Activated CD8-positive, alpha-beta T cell treated with anti-CD3 and anti-CD28 coated beads for 36 hours (primary cell): ENCODE measurements at regions of chr15 and their contacts with region 1.

Region 1: DNA sequence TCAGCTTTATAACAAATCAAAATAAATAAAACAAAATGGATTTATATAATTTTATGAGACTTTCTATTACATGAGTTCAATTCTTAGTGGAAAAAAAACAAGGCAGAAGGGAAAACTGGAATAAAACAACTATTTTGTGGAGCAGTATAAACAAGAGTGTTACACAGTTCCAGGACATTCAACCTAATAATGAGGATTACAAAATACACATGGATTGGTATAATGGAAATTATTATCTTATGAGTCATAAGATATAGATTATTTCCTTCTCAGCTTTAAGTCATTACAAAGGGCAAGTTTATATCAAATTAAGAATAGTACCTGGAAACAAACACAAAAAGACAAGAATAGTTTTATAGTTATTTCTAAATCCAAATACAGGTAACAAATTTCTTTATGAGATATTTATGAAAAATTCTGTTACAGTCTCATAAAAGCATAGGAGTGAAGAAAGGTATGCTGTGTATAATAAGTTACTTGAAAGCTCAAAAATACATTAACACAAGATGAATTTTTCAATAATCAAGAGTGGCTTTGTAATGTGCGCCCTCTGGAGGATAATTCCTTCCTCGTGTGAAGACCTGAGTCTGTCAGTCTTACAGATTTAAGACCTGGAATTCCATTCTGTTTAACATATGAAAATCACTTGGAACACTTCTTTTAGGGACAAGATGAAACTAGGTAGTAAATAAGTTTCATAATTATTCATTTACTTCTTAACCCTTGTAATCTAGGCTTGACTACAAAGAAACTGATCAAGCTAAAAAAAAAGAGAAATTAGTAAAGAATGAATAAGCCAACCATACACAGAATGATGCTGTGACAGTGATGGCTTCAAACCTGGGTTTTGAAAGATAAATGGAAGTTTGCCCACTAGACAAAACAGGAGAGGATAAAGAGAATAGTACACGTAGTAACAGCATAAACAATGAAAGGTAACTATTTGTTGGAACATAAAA is 9.5 kb downstream of the COPS2 start:
- DNase-seq: peak; percentile 48
- ATAC-seq: peak; percentile 24
- H3K4me3 Mint-ChIP-seq: no peak overlapping the region
- H3K27ac Mint-ChIP-seq: no peak overlapping the region
- H3K4me1 Mint-ChIP-seq: peaks cover 40% of the 10 kb centered on the region
- H3K27me3 Mint-ChIP-seq: no peaks in the 10 kb centered on the region
- CTCF ChIP-seq: peak; percentile 58

Region 2: DNA sequence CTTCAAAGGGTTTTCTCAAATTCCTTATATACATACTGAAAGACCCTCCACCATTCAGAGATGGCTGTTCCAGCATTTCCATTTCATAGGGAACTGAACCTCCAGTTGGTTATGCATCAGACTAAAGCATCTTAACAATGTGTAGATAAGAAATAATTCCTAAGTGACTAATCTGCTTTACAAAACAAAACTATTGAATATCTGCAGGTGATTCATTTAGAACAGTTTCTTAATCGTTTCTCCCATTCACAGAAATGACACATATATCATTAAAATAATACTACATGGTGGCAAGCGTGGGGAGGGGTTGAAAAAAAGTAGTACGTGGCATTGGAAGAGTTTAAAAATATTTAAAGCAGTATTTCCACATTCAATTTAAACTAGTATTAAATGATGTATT is 10.0 kb before region 1 on chr15:
- CTCF ChIA-PET with region 1: interaction called, 22 read pairs
- POLR2A ChIA-PET with region 1: no interaction called
- intact Hi-C with region 1: no loop called
- DNase-seq: no peak
- ATAC-seq: no peak
- H3K4me3 Mint-ChIP-seq: no peak overlapping the region
- H3K27ac Mint-ChIP-seq: peak overlapping the region; percentile 65
- H3K4me1 Mint-ChIP-seq: peaks cover 22% of the 10 kb centered on the region
- H3K27me3 Mint-ChIP-seq: no peaks in the 10 kb centered on the region
- CTCF ChIP-seq: no peak

Region 3: DNA sequence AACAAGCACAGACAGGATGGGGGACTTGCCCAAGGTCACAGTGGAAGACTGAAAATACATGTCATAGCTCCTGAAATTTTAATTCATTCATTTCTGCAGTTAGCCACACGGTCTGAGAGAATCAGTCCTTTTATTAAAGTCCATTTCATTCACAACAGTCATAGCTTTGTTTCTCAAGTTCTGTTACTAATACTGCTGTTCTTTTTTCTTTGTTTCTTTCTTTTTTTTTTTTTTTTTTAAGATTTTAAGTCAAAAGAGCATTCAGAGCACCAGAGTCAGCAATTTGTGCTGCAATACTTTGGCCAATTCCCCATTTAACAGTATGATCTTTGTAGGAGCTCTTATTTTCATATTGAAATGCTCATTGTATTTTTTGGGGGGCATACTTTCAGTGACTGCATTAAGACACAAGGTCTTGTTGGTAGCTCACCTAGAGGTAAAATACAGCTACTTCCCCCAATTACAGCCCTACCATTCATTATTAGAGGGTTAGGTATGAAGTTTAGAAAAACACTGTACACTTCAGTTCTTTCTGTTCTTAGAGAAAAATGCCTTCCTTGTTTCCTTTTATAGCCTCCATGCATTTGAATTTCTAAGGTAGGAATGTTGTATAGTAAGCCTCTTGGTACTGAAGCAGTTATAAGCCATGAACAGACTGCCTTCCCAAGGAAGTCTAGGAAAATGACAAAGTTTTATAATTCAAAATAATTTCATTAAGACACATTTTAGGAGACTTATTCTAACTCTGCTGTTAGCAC is 33.7 kb after region 1 on chr15:
- CTCF ChIA-PET with region 1: no interaction called
- POLR2A ChIA-PET with region 1: no interaction called
- intact Hi-C with region 1: no loop called
- DNase-seq: no peak
- ATAC-seq: no peak
- H3K4me3 Mint-ChIP-seq: no peak overlapping the region
- H3K27ac Mint-ChIP-seq: no peak overlapping the region
- H3K4me1 Mint-ChIP-seq: peaks cover 14% of the 10 kb centered on the region
- H3K27me3 Mint-ChIP-seq: no peaks in the 10 kb centered on the region
- CTCF ChIP-seq: no peak

Region 4: GRCh38 chr15:49215768-49216739 is 70.1 kb after region 1 on chr15:
- CTCF ChIA-PET with region 1: no interaction called
- POLR2A ChIA-PET with region 1: no interaction called
- intact Hi-C with region 1: no loop called
- DNase-seq: no peak
- ATAC-seq: no peak
- H3K4me3 Mint-ChIP-seq: no peak overlapping the region
- H3K27ac Mint-ChIP-seq: peak overlapping the region; percentile 4
- H3K4me1 Mint-ChIP-seq: peaks cover 7% of the 10 kb centered on the region
- H3K27me3 Mint-ChIP-seq: no peaks in the 10 kb centered on the region
- CTCF ChIP-seq: no peak